Sciatic nerve (tissue), 2 donors: ENCODE measurements at regions of chr12 and their contacts with region 1.

Region 1: GRCh38 chr12:104505095-104505818 is 48.5 kb downstream of the CHST11 start:
- DNase-seq: no peak
- ATAC-seq: peak; percentile 27

Region 2: GRCh38 chr12:104604070-104604994 is 99.1 kb after region 1 on chr12:
- intact Hi-C with region 1: loop called (anchors 10 kb)
- DNase-seq: peak; percentile 75
- ATAC-seq: peak; percentile 88

Region 3: GRCh38 chr12:104896146-104896545 is 390.9 kb after region 1 on chr12:
- intact Hi-C with region 1: no loop called
- DNase-seq: no peak
- ATAC-seq: no peak